HepG2 (cell line): ENCODE measurements at regions of chr12 and their contacts with region 1.

Region 1: GRCh38 chr12:80763874-80764273 is 47.2 kb downstream of the MYF5 start:
- DNase-seq: peak; percentile 52
- ATAC-seq: no peak
- H3K4me3 ChIP-seq: no peak overlapping the region
- H3K27ac ChIP-seq: no peak overlapping the region
- H3K4me1 ChIP-seq: peaks cover 12% of the 10 kb centered on the region
- H3K27me3 ChIP-seq: no peaks in the 10 kb centered on the region
- CTCF ChIP-seq: peak; percentile 42
- EP300 ChIP-seq: no peak
- POLR2A ChIP-seq: no peak
- RAD21 ChIP-seq: no peak

Region 2: DNA sequence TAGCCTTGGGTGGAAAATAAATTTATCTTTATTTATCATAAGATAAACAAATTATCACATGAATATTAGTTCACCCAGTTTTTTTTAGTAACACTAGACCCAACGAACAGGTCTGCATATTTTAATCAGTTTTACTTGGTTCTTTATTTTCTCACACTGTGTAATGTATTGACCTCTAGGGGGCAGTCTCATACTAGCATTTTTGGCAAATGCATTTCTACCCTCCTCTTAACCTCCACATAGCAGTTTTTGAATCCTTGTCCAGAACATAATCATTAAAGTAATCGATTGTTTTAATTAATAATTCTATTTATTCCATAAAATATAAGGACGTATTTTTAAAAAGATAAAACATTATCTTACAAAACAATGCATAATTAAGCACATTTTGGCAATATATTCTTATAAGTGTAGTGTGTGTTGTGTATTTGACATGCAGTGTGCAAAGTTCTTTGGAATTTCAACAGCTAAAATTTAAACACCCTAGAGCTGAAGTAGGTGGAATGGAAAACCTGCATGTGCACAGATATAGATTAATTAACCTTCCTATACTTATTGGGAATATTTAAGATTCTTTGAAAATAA is 351.4 kb before region 1 on chr12:
- CTCF ChIA-PET with region 1: no interaction called
- POLR2A ChIA-PET with region 1: no interaction called
- in situ Hi-C with region 1: no loop called
- intact Hi-C with region 1: loop called (anchors 1 kb)
- DNase-seq: peak; percentile 40
- ATAC-seq: peak; percentile 71; the same call in 2 of the 3 replicates
- H3K4me3 ChIP-seq: no peak overlapping the region
- H3K27ac ChIP-seq: no peak overlapping the region
- H3K4me1 ChIP-seq: no peaks in the 10 kb centered on the region
- H3K27me3 ChIP-seq: no peaks in the 10 kb centered on the region
- CTCF ChIP-seq: peak; percentile 64
- EP300 ChIP-seq: no peak
- POLR2A ChIP-seq: no peak
- RAD21 ChIP-seq: 0 out of 2 replicates have a peak, but pooled peaks have one; percentile 19

Region 3: GRCh38 chr12:80472902-80473500 is 290.9 kb before region 1 on chr12:
- CTCF ChIA-PET with region 1: no interaction called
- POLR2A ChIA-PET with region 1: no interaction called
- in situ Hi-C with region 1: no loop called
- intact Hi-C with region 1: loop called (anchors 1 kb)
- DNase-seq: peak; percentile 35
- ATAC-seq: peak; percentile 65; the same call in 2 of the 3 replicates
- H3K4me3 ChIP-seq: no peak overlapping the region
- H3K27ac ChIP-seq: no peak overlapping the region
- H3K4me1 ChIP-seq: no peaks in the 10 kb centered on the region
- H3K27me3 ChIP-seq: no peaks in the 10 kb centered on the region
- CTCF ChIP-seq: peak; percentile 69
- EP300 ChIP-seq: no peak
- POLR2A ChIP-seq: no peak
- RAD21 ChIP-seq: peak; percentile 40; the same call in 1 of the 2 replicates

Region 4: DNA sequence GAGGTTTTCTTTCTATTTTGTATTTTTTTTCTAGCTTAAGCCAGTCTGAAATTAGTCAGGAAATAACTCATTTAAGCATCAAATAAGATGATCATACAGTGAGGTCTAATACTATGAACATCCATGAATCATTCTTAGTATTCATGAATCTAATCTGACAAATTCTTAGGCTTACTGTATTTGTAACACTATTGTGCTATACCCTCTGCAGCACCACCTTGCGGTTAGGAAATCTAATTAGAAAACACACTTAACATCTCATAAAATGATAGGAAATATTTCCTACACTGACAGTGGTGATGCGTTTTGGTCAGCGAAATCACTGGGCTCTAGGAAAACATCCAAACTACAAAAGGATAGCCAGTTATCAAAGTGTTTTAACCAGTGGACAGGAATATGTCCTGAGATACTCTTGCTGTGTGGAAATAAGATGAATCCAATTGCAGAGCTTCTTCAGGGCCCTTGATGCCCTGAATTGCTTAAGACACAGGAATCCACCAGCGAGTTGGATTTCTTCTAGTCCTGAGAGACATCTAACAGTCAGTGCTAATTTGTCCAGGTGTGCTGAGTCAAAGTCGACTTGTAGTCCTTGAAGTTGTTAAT is 165.8 kb before region 1 on chr12:
- CTCF ChIA-PET with region 1: no interaction called
- POLR2A ChIA-PET with region 1: no interaction called
- in situ Hi-C with region 1: no loop called
- intact Hi-C with region 1: loop called (anchors 1 kb)
- DNase-seq: peak; percentile 20
- ATAC-seq: peak; percentile 59
- H3K4me3 ChIP-seq: no peak overlapping the region
- H3K27ac ChIP-seq: no peak overlapping the region
- H3K4me1 ChIP-seq: no peaks in the 10 kb centered on the region
- H3K27me3 ChIP-seq: no peaks in the 10 kb centered on the region
- CTCF ChIP-seq: peak; percentile 47; the same call in 1 of the 2 replicates
- EP300 ChIP-seq: no peak
- POLR2A ChIP-seq: no peak
- RAD21 ChIP-seq: no peak

Region 5: GRCh38 chr12:80632835-80633234 is 131.0 kb before region 1 on chr12:
- CTCF ChIA-PET with region 1: no interaction called
- POLR2A ChIA-PET with region 1: no interaction called
- in situ Hi-C with region 1: no loop called
- intact Hi-C with region 1: loop called (anchors 10 kb)
- DNase-seq: peak; percentile 23
- ATAC-seq: peak; percentile 75
- H3K4me3 ChIP-seq: no peak overlapping the region
- H3K27ac ChIP-seq: no peak overlapping the region
- H3K4me1 ChIP-seq: no peaks in the 10 kb centered on the region
- H3K27me3 ChIP-seq: no peaks in the 10 kb centered on the region
- CTCF ChIP-seq: peak; percentile 53
- EP300 ChIP-seq: no peak
- POLR2A ChIP-seq: no peak
- RAD21 ChIP-seq: no peak